PC-3 (cell line): ENCODE measurements at regions of chr11 and their contacts with region 1.

Region 1: DNA sequence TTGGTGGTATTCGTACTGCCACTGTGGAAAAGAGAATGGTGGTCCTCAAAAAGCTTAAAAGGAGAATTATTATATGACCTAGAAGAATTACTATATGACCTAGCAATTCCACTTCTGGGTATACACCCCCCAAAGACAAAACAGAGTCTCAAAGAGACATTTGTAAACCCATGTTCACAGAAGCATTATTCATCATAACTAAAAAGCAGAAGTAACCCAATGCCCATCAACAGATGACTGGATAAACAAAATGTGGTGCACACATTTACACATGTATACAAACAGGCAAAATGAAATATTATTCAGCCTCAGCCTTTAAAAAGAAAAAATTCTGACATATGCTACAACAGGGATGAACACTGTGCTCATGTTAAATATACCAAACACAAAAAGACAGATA is 89.4 kb downstream of the ARHGAP32 start:
- DNase-seq: no peak
- ATAC-seq: no peak
- H3K4me3 ChIP-seq: no peak overlapping the region
- H3K27ac ChIP-seq: no peak overlapping the region
- H3K4me1 ChIP-seq: no peaks in the 10 kb centered on the region
- H3K27me3 ChIP-seq: no peaks in the 10 kb centered on the region
- CTCF ChIP-seq: no peak

Region 2: DNA sequence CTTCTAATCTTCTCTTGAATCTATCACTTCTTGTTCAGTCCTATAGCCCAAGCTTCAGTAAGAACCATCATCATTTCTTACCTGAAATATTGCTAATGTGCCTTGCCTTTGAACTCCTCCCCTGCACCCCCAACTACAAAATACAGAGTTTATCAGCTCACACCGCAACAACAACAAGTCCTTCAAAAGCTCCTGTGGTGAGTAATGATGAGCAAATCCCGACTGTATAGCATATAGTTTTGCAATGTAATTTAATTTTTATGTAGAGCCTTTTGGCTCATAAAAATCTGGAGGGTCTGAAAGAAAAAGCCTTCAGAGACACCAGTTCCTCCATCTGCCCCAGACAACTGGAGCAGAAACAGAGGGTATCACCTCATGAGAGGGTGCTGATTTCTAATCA is 35.3 kb before region 1 on chr11:
- CTCF ChIA-PET with region 1: no interaction called
- POLR2A ChIA-PET with region 1: no interaction called
- intact Hi-C with region 1: loop called (anchors 2 kb)
- DNase-seq: peak; percentile 56
- ATAC-seq: peak; percentile 57; the same call in 1 of the 2 replicates
- H3K4me3 ChIP-seq: no peak overlapping the region
- H3K27ac ChIP-seq: no peak overlapping the region
- H3K4me1 ChIP-seq: peaks cover 12% of the 10 kb centered on the region
- H3K27me3 ChIP-seq: no peaks in the 10 kb centered on the region
- CTCF ChIP-seq: no peak